ENCODE measurements at regions of chr9 and their contacts with region 1.

Region 1: DNA sequence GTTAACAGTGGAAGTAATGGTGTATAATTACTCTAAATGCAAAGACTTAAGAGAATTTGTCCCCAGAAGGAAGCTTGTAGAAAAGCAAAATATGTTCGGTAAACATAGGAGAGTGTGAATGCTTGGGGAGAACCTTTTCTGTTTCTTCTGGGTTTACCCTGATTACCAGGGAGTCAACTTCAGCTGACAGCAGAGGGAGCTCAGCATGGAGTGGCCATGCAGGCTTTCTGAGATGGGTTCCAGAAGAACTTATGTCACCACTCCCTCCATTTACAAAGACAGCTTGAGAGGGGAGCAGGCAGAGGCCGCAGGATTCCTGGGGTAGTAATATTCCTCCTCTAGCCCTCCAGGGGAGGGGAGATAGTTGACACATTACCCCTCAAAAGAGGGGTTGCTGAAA is 95.7 kb downstream of the SLC28A3 start:
- DNase-seq: no peak
- H3K4me3 ChIP-seq: no peak overlapping the region
- H3K27ac ChIP-seq: no peak overlapping the region
- H3K4me1 ChIP-seq: no peaks in the 10 kb centered on the region
- H3K27me3 ChIP-seq: no peaks in the 10 kb centered on the region

Region 2: DNA sequence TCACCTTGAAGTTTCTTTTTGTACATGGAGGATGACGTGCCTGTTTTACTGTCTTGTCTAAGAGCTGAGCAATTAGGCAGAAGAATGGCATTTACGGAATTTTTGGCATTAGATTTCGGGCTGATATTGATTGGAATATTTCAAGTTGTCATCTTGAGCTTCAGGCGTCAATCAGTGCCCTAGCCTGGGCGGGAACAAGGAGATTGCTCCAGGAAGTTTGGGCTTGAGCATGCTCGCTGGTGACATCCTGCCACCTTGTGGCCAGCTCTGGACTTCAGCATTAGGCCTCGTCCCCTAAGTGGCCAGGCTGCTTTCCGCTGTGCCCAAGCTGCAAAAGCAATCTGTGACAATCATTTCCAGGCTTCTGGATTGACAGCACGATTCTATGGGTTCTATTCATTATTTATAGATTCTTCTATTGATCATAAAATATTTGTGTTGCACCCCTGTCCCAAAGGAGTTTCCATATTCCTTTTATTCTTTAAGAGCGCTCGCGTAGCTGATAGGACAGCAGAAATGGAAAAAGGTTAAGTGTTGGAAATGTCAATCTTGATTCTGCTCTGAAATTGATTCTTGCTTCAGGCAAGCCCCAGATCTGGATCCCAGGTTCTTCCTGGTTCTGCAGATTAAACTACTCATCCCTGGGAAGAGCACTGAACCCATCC is 16.4 kb after region 1 on chr9:
- CTCF ChIA-PET with region 1: interaction called, 10 read pairs
- POLR2A ChIA-PET with region 1: no interaction called
- DNase-seq: peak; percentile 56 to 69 (median 62)
- H3K4me3 ChIP-seq: peak overlapping the region in 1 of 7 experiments; percentile 36
- H3K27ac ChIP-seq: no peak overlapping the region
- H3K4me1 ChIP-seq: peaks cover 0 to 10% (median 2%) of the 10 kb centered on the region in 4 experiments
- H3K27me3 ChIP-seq: peaks cover 0 to 7% (median 0%) of the 10 kb centered on the region in 5 experiments

Measured in common myeloid progenitor, CD34-positive (primary cell).